ENCODE measurements at regions of chr3 and their contacts with region 1.

Region 1: GRCh38 chr3:32467333-32468070 is 35.1 kb downstream of the CMTM6 start:
- DNase-seq: no peak
- ATAC-seq: peak; percentile 80
- H3K4me3 ChIP-seq: peak overlapping the region; percentile 43; the same call in 1 of the 2 replicates
- H3K27ac ChIP-seq: no peak overlapping the region
- H3K4me1 ChIP-seq: peaks cover 39% of the 10 kb centered on the region
- H3K27me3 ChIP-seq: no peaks in the 10 kb centered on the region
- CTCF ChIP-seq: peak; percentile 95 to 96 (median 96); a peak in 5 of 6 replicates
- EP300 ChIP-seq: no peak
- POLR2A ChIP-seq: no peak
- RAD21 ChIP-seq: peak; percentile 96

Region 2: DNA sequence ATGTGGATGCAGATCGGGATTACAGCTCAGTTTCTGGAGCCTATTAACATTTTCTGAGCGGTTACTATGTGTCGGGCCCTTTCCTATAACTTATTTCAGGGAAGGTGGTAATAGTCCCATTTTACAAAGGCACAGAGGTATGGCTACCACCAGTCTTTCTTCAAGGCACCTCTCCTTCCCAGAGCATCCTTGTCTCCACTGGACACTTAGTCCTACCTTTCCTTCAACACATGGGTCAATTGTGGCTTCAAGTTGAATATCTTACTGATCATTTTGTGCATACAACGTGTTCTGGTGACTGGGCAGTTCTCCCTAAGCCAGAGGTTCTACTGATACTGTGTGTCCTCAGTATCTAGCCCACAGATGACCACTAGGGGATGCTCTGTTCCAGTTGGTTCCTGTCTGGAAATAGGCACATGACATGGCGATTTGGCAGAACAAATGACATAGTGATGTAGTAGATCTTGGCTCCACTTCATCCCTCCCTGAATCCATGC is 289.8 kb before region 1 on chr3:
- CTCF ChIA-PET with region 1: interaction called, 10 read pairs
- POLR2A ChIA-PET with region 1: no interaction called
- RAD21 ChIA-PET with region 1: no interaction called
- SMC1A ChIA-PET with region 1: no interaction called
- in situ Hi-C with region 1: no loop called
- intact Hi-C with region 1: loop called (anchors 5 kb)
- DNase-seq: no peak
- ATAC-seq: peak; percentile 95
- H3K4me3 ChIP-seq: no peak overlapping the region
- H3K27ac ChIP-seq: no peak overlapping the region
- H3K4me1 ChIP-seq: no peaks in the 10 kb centered on the region
- H3K27me3 ChIP-seq: no peaks in the 10 kb centered on the region; a peak in 1 of 4 replicates
- CTCF ChIP-seq: peak; percentile 63 to 86 (median 82)
- EP300 ChIP-seq: no peak
- POLR2A ChIP-seq: no peak
- RAD21 ChIP-seq: peak; percentile 48

Region 3: GRCh38 chr3:32216172-32216783 is 251.2 kb before region 1 on chr3:
- CTCF ChIA-PET with region 1: no interaction called
- POLR2A ChIA-PET with region 1: no interaction called
- RAD21 ChIA-PET with region 1: no interaction called
- SMC1A ChIA-PET with region 1: no interaction called
- in situ Hi-C with region 1: no loop called
- intact Hi-C with region 1: no loop called
- DNase-seq: no peak
- ATAC-seq: no peak
- H3K4me3 ChIP-seq: no peak overlapping the region
- H3K27ac ChIP-seq: no peak overlapping the region
- H3K4me1 ChIP-seq: no peaks in the 10 kb centered on the region
- H3K27me3 ChIP-seq: peaks cover 0 to 2% of the 10 kb centered on the region in 2 experiments; a peak in 2 of 4 replicates
- CTCF ChIP-seq: no peak
- EP300 ChIP-seq: no peak
- POLR2A ChIP-seq: no peak
- RAD21 ChIP-seq: no peak

Region 4: GRCh38 chr3:32276279-32276847 is 191.1 kb before region 1 on chr3:
- CTCF ChIA-PET with region 1: no interaction called
- POLR2A ChIA-PET with region 1: no interaction called
- RAD21 ChIA-PET with region 1: no interaction called
- SMC1A ChIA-PET with region 1: no interaction called
- in situ Hi-C with region 1: no loop called
- intact Hi-C with region 1: no loop called
- DNase-seq: no peak
- ATAC-seq: no peak
- H3K4me3 ChIP-seq: no peak overlapping the region
- H3K27ac ChIP-seq: no peak overlapping the region
- H3K4me1 ChIP-seq: no peaks in the 10 kb centered on the region
- H3K27me3 ChIP-seq: no peaks in the 10 kb centered on the region
- CTCF ChIP-seq: no peak
- EP300 ChIP-seq: no peak
- POLR2A ChIP-seq: no peak
- RAD21 ChIP-seq: no peak

Region 5: GRCh38 chr3:32391643-32392535 is 75.6 kb before region 1 on chr3 and contains the start of gene CMTM7:
- CTCF ChIA-PET with region 1: interaction called, 88 read pairs
- POLR2A ChIA-PET with region 1: no interaction called
- RAD21 ChIA-PET with region 1: interaction called, 57 read pairs
- SMC1A ChIA-PET with region 1: interaction called, 31 read pairs
- in situ Hi-C with region 1: no loop called
- intact Hi-C with region 1: loop called (anchors 5 kb)
- DNase-seq: no peak
- ATAC-seq: peak; percentile 79
- H3K4me3 ChIP-seq: peak within 1 kb of the TSS; percentile 68
- H3K27ac ChIP-seq: no peak within 1 kb of the TSS
- H3K4me1 ChIP-seq: peaks cover 4% of the 10 kb centered on the region
- H3K27me3 ChIP-seq: peaks cover 0 to 4% of the 10 kb centered on the region in 2 experiments; a peak in 2 of 4 replicates
- CTCF ChIP-seq: no peak
- EP300 ChIP-seq: no peak
- POLR2A ChIP-seq: no peak
- RAD21 ChIP-seq: no peak
- polyA plus RNA-seq, gene CMTM7: 3.7 to 12.0 TPM

Region 6: DNA sequence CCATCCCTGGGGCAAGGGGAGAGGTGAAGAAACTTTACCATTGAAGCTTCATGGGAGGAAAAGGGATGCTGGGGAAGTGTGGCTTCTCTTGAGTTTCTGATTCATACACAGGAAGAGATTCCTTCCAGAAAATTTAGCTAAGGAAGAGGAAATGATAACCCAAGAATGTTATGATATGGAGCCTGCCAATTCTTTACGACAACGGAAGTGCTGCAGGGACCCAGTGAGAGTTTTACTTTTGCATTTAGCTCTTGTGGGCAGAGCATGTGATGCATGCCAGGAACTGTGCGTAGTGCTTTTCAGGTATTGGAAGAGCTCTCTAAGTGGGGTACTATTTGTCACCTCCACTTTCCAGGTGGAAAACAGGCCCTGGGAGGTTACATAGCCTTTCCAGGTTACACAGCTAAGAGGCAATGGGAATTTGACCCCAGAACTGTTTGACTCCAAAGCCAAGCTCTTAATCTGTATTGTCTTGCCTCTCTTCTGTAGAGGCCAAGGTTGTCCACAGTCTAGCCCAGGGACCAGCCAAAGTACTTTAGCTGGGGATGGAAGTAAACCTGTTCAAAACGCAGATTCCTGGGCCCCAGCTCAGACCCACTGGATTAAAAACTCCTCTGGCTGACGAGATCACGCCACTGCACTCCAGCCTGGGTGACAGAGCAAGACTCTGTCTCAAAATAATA is 52.8 kb before region 1 on chr3:
- CTCF ChIA-PET with region 1: interaction called, 22 read pairs
- POLR2A ChIA-PET with region 1: interaction called, 3 read pairs
- RAD21 ChIA-PET with region 1: interaction called, 67 read pairs
- SMC1A ChIA-PET with region 1: interaction called, 36 read pairs
- in situ Hi-C with region 1: no loop called
- intact Hi-C with region 1: no loop called
- DNase-seq: no peak
- ATAC-seq: peak; percentile 85
- H3K4me3 ChIP-seq: no peak overlapping the region
- H3K27ac ChIP-seq: no peak overlapping the region
- H3K4me1 ChIP-seq: peaks cover 3% of the 10 kb centered on the region
- H3K27me3 ChIP-seq: no peaks in the 10 kb centered on the region
- CTCF ChIP-seq: no peak
- EP300 ChIP-seq: no peak
- POLR2A ChIP-seq: no peak
- RAD21 ChIP-seq: no peak

Region 7: GRCh38 chr3:32438596-32439344 is 28.7 kb before region 1 on chr3:
- CTCF ChIA-PET with region 1: interaction called, 88 read pairs
- POLR2A ChIA-PET with region 1: interaction called, 4 read pairs
- RAD21 ChIA-PET with region 1: interaction called, 64 read pairs
- SMC1A ChIA-PET with region 1: interaction called, 60 read pairs
- in situ Hi-C with region 1: no loop called
- intact Hi-C with region 1: loop called (anchors 2 kb)
- DNase-seq: peak; percentile 92
- ATAC-seq: peak; percentile 89
- H3K4me3 ChIP-seq: no peak overlapping the region
- H3K27ac ChIP-seq: peak overlapping the region; percentile 38
- H3K4me1 ChIP-seq: peaks cover 56% of the 10 kb centered on the region
- H3K27me3 ChIP-seq: no peaks in the 10 kb centered on the region
- CTCF ChIP-seq: no peak
- EP300 ChIP-seq: peak; percentile 96 to 99
- POLR2A ChIP-seq: no peak
- RAD21 ChIP-seq: no peak

Region 8: GRCh38 chr3:32502118-32502945 is 34.8 kb after region 1 on chr3 and contains the start of gene CMTM6:
- CTCF ChIA-PET with region 1: interaction called, 41 read pairs
- POLR2A ChIA-PET with region 1: interaction called, 8 read pairs
- RAD21 ChIA-PET with region 1: interaction called, 27 read pairs
- SMC1A ChIA-PET with region 1: interaction called, 61 read pairs
- in situ Hi-C with region 1: no loop called
- intact Hi-C with region 1: no loop called
- DNase-seq: no peak
- ATAC-seq: peak; percentile 85
- H3K4me3 ChIP-seq: peak within 1 kb of the TSS; percentile 88
- H3K27ac ChIP-seq: peak within 1 kb of the TSS; percentile 78
- H3K4me1 ChIP-seq: peaks cover 4% of the 10 kb centered on the region; the same call in 1 of the 2 replicates
- H3K27me3 ChIP-seq: no peaks in the 10 kb centered on the region
- CTCF ChIP-seq: no peak
- EP300 ChIP-seq: no peak
- POLR2A ChIP-seq: peak; percentile 86
- RAD21 ChIP-seq: 0 out of 2 replicates have a peak, but pooled peaks have one; percentile 6
- polyA plus RNA-seq, gene CMTM6: 27.1 to 39.0 TPM

Region 9: GRCh38 chr3:32655167-32655566 is 187.7 kb after region 1 on chr3:
- CTCF ChIA-PET with region 1: no interaction called
- POLR2A ChIA-PET with region 1: no interaction called
- RAD21 ChIA-PET with region 1: no interaction called
- SMC1A ChIA-PET with region 1: no interaction called
- in situ Hi-C with region 1: no loop called
- intact Hi-C with region 1: no loop called
- DNase-seq: no peak
- ATAC-seq: no peak
- H3K4me3 ChIP-seq: no peak overlapping the region
- H3K27ac ChIP-seq: no peak overlapping the region
- H3K4me1 ChIP-seq: no peaks in the 10 kb centered on the region
- H3K27me3 ChIP-seq: no peaks in the 10 kb centered on the region; a peak in 1 of 4 replicates
- CTCF ChIP-seq: no peak
- EP300 ChIP-seq: no peak
- POLR2A ChIP-seq: no peak
- RAD21 ChIP-seq: no peak